Panc1 (cell line): ENCODE measurements at regions of chr1 and their contacts with region 1.

Region 1: GRCh38 chr1:27489910-27490741 is at the start of gene WASF2:
- DNase-seq: peak; percentile 91
- ATAC-seq: peak; percentile 94
- H3K4me3 ChIP-seq: peak within 1 kb of the TSS; percentile 93 to 100
- H3K27ac ChIP-seq: peak within 1 kb of the TSS; percentile 99
- H3K4me1 ChIP-seq: peaks cover 25% of the 10 kb centered on the region
- H3K27me3 ChIP-seq: no peaks in the 10 kb centered on the region
- CTCF ChIP-seq: no peak
- total RNA-seq, gene WASF2: 121 TPM

Region 2: GRCh38 chr1:27416387-27417111 is 73.6 kb before region 1 on chr1:
- CTCF ChIA-PET with region 1: interaction called, 3 read pairs
- POLR2A ChIA-PET with region 1: no interaction called
- in situ Hi-C with region 1: no loop called
- intact Hi-C with region 1: loop called (anchors 10 kb)
- DNase-seq: no peak
- ATAC-seq: peak; percentile 76
- H3K4me3 ChIP-seq: no peak overlapping the region
- H3K27ac ChIP-seq: no peak overlapping the region
- H3K4me1 ChIP-seq: peaks cover 11% of the 10 kb centered on the region
- H3K27me3 ChIP-seq: no peaks in the 10 kb centered on the region
- CTCF ChIP-seq: peak; percentile 83

Region 3: DNA sequence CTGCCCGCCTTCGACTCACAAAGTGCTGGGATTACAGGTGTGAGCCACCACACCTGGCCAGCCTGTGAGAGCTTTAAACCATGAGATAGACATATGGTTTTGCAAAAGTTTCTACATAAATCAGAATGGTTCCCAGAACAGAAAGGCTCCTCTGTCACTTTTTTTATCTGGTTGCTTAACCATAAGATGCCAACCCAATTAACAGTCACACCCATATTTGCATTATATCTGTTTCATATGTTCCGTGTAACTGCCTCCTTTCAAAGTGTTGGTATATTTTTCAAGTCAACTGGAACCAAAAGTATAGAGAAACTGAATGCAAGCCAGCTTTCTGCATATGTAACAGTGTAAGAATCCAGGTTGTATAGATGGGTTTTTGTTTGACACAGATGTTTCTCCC is 992.0 kb after region 1 on chr1:
- CTCF ChIA-PET with region 1: no interaction called
- POLR2A ChIA-PET with region 1: no interaction called
- in situ Hi-C with region 1: no loop called
- intact Hi-C with region 1: no loop called
- DNase-seq: no peak
- ATAC-seq: no peak
- H3K4me3 ChIP-seq: no peak overlapping the region
- H3K27ac ChIP-seq: no peak overlapping the region
- H3K4me1 ChIP-seq: no peaks in the 10 kb centered on the region
- H3K27me3 ChIP-seq: no peaks in the 10 kb centered on the region
- CTCF ChIP-seq: no peak